Mammary epithelial cell (primary cell): ENCODE measurements at regions of chr9 and their contacts with region 1.

Region 1: GRCh38 chr9:82021198-82021597 is 32.6 kb downstream of the SPATA31D1 start:
- DNase-seq: peak; percentile 99
- H3K4me3 ChIP-seq: no peak overlapping the region
- H3K27ac ChIP-seq: peak overlapping the region; percentile 71
- H3K4me1 ChIP-seq: peaks cover 15% of the 10 kb centered on the region
- H3K27me3 ChIP-seq: no peaks in the 10 kb centered on the region
- CTCF ChIP-seq: peak in 1 of 2 donors; percentile 6

Region 2: DNA sequence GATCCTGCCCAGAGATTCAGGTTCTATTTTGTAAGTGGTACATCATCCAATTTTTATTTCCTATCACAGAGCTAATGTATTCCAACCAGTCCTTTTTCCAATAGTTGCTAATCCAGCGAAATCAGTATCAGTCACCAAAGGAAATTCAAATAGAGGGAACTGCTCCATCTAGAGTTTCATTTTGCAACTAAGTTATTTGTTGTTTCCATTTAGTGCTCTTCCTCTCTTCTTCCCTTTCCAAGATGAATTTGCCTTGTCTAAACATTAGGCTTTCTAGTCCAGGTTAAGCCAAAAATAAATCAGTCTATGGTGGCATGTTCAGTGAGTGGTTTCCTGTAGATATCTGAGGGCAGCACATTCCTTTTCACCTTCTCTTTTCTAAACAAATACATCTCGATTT is 172.7 kb before region 1 on chr9:
- CTCF ChIA-PET with region 1: interaction called, 6 read pairs
- dilution Hi-C with region 1: no loop called
- in situ Hi-C with region 1: no loop called
- intact Hi-C with region 1: loop called (anchors 10 kb)
- DNase-seq: peak; percentile 32
- H3K4me3 ChIP-seq: no peak overlapping the region
- H3K27ac ChIP-seq: no peak overlapping the region
- H3K4me1 ChIP-seq: no peaks in the 10 kb centered on the region
- H3K27me3 ChIP-seq: no peaks in the 10 kb centered on the region
- CTCF ChIP-seq: peak; percentile 31 to 53

Region 3: GRCh38 chr9:82101475-82101874 is 80.3 kb after region 1 on chr9:
- CTCF ChIA-PET with region 1: no interaction called
- dilution Hi-C with region 1: no loop called
- in situ Hi-C with region 1: no loop called
- intact Hi-C with region 1: no loop called
- DNase-seq: no peak
- H3K4me3 ChIP-seq: no peak overlapping the region
- H3K27ac ChIP-seq: no peak overlapping the region
- H3K4me1 ChIP-seq: no peaks in the 10 kb centered on the region
- H3K27me3 ChIP-seq: no peaks in the 10 kb centered on the region
- CTCF ChIP-seq: peak; percentile 41 to 48

Region 4: GRCh38 chr9:82475584-82476301 is 454.5 kb after region 1 on chr9:
- CTCF ChIA-PET with region 1: no interaction called
- dilution Hi-C with region 1: no loop called
- in situ Hi-C with region 1: no loop called
- intact Hi-C with region 1: no loop called
- DNase-seq: no peak
- H3K4me3 ChIP-seq: no peak overlapping the region
- H3K27ac ChIP-seq: no peak overlapping the region
- H3K4me1 ChIP-seq: no peaks in the 10 kb centered on the region
- H3K27me3 ChIP-seq: no peaks in the 10 kb centered on the region
- CTCF ChIP-seq: no peak